Natural killer cell (primary cell): ENCODE measurements at regions of chr5 and their contacts with region 1.

Region 1: GRCh38 chr5:178590141-178590923 is at the start of gene COL23A1:
- DNase-seq: peak; percentile 44 to 62
- ATAC-seq: peak; percentile 74 to 88 (median 86)
- H3K4me3 ChIP-seq: peak within 1 kb of the TSS; percentile 16
- H3K4me3 Mint-ChIP-seq: peak within 1 kb of the TSS; percentile 85
- H3K27ac ChIP-seq: no peak within 1 kb of the TSS
- H3K27ac Mint-ChIP-seq: no peak within 1 kb of the TSS
- H3K4me1 ChIP-seq: peaks cover 14% of the 10 kb centered on the region
- H3K4me1 Mint-ChIP-seq: peaks cover 0 to 10% of the 10 kb centered on the region in 2 donors
- H3K27me3 ChIP-seq: peaks cover 13% of the 10 kb centered on the region
- H3K27me3 Mint-ChIP-seq: peaks cover 25 to 54% of the 10 kb centered on the region in 2 donors
- CTCF ChIP-seq: peak; percentile 25
- total RNA-seq, gene COL23A1: 0.15 TPM in 1 of 3 donors, not detected in the others

Region 2: GRCh38 chr5:178279725-178280438 is 310.4 kb before region 1 on chr5:
- intact Hi-C with region 1: loop called (anchors 2 kb)
- DNase-seq: peak; percentile 59 to 67
- ATAC-seq: peak; percentile 55 to 81 (median 69)
- H3K4me3 ChIP-seq: no peak overlapping the region
- H3K4me3 Mint-ChIP-seq: no peak overlapping the region
- H3K27ac ChIP-seq: no peak overlapping the region
- H3K27ac Mint-ChIP-seq: no peak overlapping the region
- H3K4me1 ChIP-seq: peaks cover 9% of the 10 kb centered on the region
- H3K4me1 Mint-ChIP-seq: peaks cover 9% of the 10 kb centered on the region in 2 donors
- H3K27me3 ChIP-seq: no peaks in the 10 kb centered on the region
- H3K27me3 Mint-ChIP-seq: peaks cover 0 to 12% of the 10 kb centered on the region in 2 donors
- CTCF ChIP-seq: peak; percentile 90

Region 3: GRCh38 chr5:178388386-178389025 is 201.8 kb before region 1 on chr5:
- intact Hi-C with region 1: no loop called
- DNase-seq: no peak
- ATAC-seq: no peak
- H3K4me3 ChIP-seq: no peak overlapping the region
- H3K4me3 Mint-ChIP-seq: no peak overlapping the region
- H3K27ac ChIP-seq: no peak overlapping the region
- H3K27ac Mint-ChIP-seq: no peak overlapping the region
- H3K4me1 ChIP-seq: no peaks in the 10 kb centered on the region
- H3K4me1 Mint-ChIP-seq: no peaks in the 10 kb centered on the region
- H3K27me3 ChIP-seq: no peaks in the 10 kb centered on the region
- H3K27me3 Mint-ChIP-seq: peaks cover 6 to 19% of the 10 kb centered on the region in 2 donors
- CTCF ChIP-seq: no peak

Region 4: DNA sequence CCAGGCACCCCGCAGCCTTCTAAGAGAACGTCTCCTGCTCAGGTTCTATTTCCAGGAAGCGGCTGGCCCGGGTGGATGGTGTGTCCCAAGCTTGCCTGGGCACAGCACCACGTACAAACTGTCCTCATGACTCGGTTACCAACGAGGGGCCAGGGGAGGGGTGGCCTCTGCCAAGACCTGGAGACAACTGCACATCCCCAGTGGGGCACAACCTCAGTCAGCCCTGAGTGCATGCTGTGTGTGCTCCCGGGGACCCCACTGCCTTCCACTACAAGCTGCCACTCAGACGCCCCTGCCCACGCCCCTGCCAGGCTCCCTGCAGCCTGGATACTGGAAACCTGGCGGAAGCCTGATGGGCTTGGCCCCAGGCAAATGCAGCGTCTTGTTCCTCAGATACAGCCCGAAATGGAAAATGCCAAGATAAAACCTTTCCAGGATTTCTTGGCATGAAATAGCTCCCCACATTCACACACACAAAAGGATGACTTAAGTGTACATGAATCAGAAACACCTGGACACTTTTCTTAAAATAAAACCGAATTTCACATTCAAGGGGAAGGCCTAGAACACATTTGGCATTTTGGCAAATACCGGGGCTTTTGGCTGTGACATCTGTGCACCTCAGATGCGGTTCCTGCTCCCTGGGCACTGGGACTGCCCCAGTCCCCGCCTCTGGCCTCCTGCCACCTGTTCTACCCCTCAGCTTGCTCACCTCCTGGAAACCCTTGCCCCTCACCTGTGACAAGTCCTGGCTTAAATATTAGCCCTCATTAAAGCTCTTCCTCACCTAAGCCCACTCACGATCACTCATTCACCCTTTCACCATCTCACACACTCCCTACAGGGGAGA is 62.6 kb before region 1 on chr5:
- intact Hi-C with region 1: no loop called
- DNase-seq: no peak
- ATAC-seq: no peak
- H3K4me3 ChIP-seq: no peak overlapping the region
- H3K4me3 Mint-ChIP-seq: no peak overlapping the region
- H3K27ac ChIP-seq: no peak overlapping the region
- H3K27ac Mint-ChIP-seq: no peak overlapping the region
- H3K4me1 ChIP-seq: no peaks in the 10 kb centered on the region
- H3K4me1 Mint-ChIP-seq: no peaks in the 10 kb centered on the region
- H3K27me3 ChIP-seq: no peaks in the 10 kb centered on the region
- H3K27me3 Mint-ChIP-seq: peaks cover 0 to 4% of the 10 kb centered on the region in 2 donors
- CTCF ChIP-seq: no peak